Activated CD4-positive, alpha-beta T cell treated with anti-CD3 and anti-CD28 coated beads for 36 hours (primary cell): ENCODE measurements at regions of chr11 and their contacts with region 1.

Region 1: DNA sequence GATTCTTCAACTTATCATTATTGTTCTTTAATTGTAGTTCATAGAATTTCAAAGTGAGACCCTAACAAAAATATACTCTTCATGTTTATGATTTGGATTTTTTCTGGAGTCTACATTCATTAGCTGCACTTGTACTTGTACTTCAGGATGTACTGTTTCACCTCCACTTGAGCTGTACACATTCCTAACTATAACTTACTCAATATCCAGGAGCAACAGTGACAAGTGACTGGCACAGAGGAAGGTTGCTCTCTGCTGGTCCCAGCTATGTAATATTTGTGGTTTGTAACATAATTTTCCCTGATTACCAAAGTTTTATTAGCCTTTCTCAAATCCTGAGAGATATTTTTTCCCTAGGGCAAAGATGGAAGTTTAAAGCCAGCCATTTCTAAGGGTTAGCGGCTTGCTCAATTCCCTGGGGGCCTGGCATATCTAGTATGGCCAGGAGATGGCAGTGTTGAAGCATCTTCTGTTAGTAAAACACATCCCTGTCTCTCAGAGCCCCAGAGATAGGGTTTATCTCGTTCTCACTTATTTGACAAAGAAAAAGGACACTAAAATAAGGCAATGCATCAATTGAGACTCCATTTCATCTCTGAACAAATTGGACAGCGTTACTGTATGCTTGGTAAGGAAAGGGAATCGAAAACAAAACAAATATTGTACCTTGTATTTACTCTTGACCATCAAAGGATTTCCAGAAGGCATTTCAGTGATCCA is 14.2 kb downstream of the OR52A5 start:
- DNase-seq: peak; percentile 69
- ATAC-seq: peak; percentile 60
- H3K4me3 Mint-ChIP-seq: no peak overlapping the region
- H3K27ac Mint-ChIP-seq: no peak overlapping the region
- H3K4me1 Mint-ChIP-seq: no peaks in the 10 kb centered on the region
- H3K27me3 Mint-ChIP-seq: peaks cover 17% of the 10 kb centered on the region

Region 2: DNA sequence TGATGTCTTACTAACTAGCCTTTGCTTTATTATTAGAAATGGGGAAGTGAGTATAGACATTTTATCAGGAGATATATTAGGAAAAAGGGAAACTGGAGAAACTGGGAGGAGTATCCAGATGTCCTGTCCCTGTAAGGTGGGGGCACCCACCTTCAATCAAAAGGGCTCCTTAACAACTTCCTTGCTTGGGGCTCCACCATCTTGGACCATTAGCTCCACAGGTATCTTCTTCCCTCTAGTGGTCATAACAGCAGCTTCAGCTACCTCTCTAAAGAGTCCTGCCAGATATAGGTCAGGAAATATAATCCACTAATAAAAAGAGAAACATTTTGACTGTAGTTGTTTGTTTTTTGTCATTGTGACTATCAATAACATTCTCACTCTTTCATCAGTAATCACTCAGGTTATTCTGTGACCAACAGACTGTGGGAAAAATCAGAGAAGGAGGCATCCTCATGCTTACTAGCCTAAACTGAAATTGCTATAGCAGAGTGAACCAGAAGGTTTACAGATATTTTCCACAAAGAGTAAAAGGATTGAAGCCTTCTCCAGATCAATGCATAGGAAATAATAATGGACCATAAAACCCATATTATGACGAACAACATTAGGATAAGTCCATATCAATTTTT is 167.4 kb after region 1 on chr11:
- CTCF ChIA-PET with region 1: no interaction called
- POLR2A ChIA-PET with region 1: no interaction called
- intact Hi-C with region 1: loop called (anchors 1 kb)
- DNase-seq: no peak
- ATAC-seq: peak; percentile 57
- H3K4me3 Mint-ChIP-seq: no peak overlapping the region
- H3K27ac Mint-ChIP-seq: no peak overlapping the region
- H3K4me1 Mint-ChIP-seq: no peaks in the 10 kb centered on the region
- H3K27me3 Mint-ChIP-seq: no peaks in the 10 kb centered on the region

Region 3: DNA sequence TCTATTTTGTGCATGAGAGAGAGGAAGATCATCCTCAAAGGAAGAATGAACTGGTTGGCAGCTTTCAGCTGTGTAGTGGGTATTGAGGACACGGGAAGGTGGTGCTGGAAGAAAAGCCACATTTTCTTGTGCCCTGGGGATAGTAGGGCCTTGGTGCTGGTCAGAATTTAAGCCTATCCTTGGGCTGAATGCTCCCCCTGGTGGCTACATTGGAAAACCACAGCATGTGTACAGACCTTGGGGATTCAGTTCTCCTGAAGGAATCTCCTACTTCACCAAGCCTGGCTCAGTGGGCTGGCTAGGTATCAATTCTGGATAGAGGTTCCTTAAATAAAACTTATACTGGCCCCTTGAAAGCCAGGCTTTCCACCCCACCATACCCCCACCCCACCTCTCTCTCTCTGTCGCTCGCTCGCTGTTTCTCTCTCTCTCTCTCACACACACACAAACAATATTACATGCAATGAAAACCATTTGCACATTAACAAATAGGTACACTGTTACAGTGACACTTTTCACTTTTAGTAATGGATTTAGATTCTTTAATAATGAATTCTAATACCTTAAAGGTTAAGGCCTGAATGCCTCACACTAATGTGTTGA is 256.9 kb after region 1 on chr11:
- CTCF ChIA-PET with region 1: interaction called, 7 read pairs
- POLR2A ChIA-PET with region 1: no interaction called
- intact Hi-C with region 1: loop called (anchors 1 kb)
- DNase-seq: peak; percentile 54
- ATAC-seq: peak; percentile 55
- H3K4me3 Mint-ChIP-seq: no peak overlapping the region
- H3K27ac Mint-ChIP-seq: no peak overlapping the region
- H3K4me1 Mint-ChIP-seq: no peaks in the 10 kb centered on the region
- H3K27me3 Mint-ChIP-seq: no peaks in the 10 kb centered on the region

Region 4: GRCh38 chr11:5550440-5551095 is 426.6 kb after region 1 on chr11:
- CTCF ChIA-PET with region 1: no interaction called
- POLR2A ChIA-PET with region 1: no interaction called
- intact Hi-C with region 1: loop called in 1 of 2 experiments (anchors 10 kb)
- DNase-seq: no peak
- ATAC-seq: no peak
- H3K4me3 Mint-ChIP-seq: no peak overlapping the region
- H3K27ac Mint-ChIP-seq: no peak overlapping the region
- H3K4me1 Mint-ChIP-seq: no peaks in the 10 kb centered on the region
- H3K27me3 Mint-ChIP-seq: peaks cover 3% of the 10 kb centered on the region

Region 5: DNA sequence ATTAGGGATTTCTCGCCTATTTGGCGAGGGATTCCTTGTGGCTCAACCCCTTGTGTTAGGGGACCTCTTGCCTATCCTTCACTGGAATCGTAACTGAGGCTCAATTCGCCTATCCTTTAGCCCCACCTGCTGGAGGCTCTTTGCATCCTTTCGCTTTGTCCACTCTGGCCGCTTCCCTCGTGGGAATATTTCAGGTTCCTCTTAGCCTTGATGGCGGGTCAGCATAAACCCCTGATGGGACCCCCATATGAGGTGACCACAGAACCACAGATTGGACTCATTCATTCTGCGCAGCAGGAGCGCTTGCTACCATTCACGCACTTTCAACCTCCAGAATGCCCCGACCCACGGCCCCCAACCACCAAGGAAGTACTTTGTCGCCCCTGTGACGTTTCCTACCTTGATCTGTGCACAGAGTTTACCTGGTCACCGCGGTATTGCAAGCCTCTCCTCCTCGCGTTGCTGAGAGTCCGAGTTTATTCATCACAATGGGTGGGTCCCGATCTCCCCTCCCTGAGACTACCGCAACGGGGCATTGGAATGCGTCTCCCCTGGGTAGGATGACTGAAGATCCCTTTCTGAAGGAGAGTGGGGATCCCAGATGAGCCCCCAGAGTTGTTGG is 684.6 kb after region 1 on chr11 and contains the start of gene OR52N2:
- CTCF ChIA-PET with region 1: no interaction called
- POLR2A ChIA-PET with region 1: no interaction called
- intact Hi-C with region 1: loop called (anchors 1 kb)
- DNase-seq: peak; percentile 82
- ATAC-seq: peak; percentile 92
- H3K4me3 Mint-ChIP-seq: peak within 1 kb of the TSS; percentile 79
- H3K27ac Mint-ChIP-seq: peak within 1 kb of the TSS; percentile 23
- H3K4me1 Mint-ChIP-seq: peaks cover 8% of the 10 kb centered on the region
- H3K27me3 Mint-ChIP-seq: peaks cover 16% of the 10 kb centered on the region
- total RNA-seq, gene OR52N2: not detected

Region 6: GRCh38 chr11:5891216-5891800 is 767.3 kb after region 1 on chr11:
- CTCF ChIA-PET with region 1: interaction called, 3 read pairs
- POLR2A ChIA-PET with region 1: no interaction called
- intact Hi-C with region 1: loop called in 1 of 2 experiments (anchors 1 kb)
- DNase-seq: no peak
- ATAC-seq: no peak
- H3K4me3 Mint-ChIP-seq: no peak overlapping the region
- H3K27ac Mint-ChIP-seq: no peak overlapping the region
- H3K4me1 Mint-ChIP-seq: no peaks in the 10 kb centered on the region
- H3K27me3 Mint-ChIP-seq: peaks cover 5% of the 10 kb centered on the region